ENCODE measurements at regions of chr19 and their contacts with region 1.

Region 1: GRCh38 chr19:55160128-55160985 is 2.8 kb upstream of the TNNI3 start:
- DNase-seq: no peak
- H3K4me3 ChIP-seq: no peak overlapping the region
- CTCF ChIP-seq: peak; percentile 96

Region 2: GRCh38 chr19:55058781-55059539 is 101.4 kb before region 1 on chr19:
- CTCF ChIA-PET with region 1: no interaction called
- POLR2A ChIA-PET with region 1: no interaction called
- DNase-seq: no peak
- H3K4me3 ChIP-seq: no peak overlapping the region
- CTCF ChIP-seq: no peak

Region 3: GRCh38 chr19:55173714-55174409 is 13.5 kb after region 1 on chr19:
- CTCF ChIA-PET with region 1: interaction called, 32 read pairs
- POLR2A ChIA-PET with region 1: no interaction called
- DNase-seq: no peak
- H3K4me3 ChIP-seq: peak overlapping the region; percentile 65
- CTCF ChIP-seq: no peak

Region 4: DNA sequence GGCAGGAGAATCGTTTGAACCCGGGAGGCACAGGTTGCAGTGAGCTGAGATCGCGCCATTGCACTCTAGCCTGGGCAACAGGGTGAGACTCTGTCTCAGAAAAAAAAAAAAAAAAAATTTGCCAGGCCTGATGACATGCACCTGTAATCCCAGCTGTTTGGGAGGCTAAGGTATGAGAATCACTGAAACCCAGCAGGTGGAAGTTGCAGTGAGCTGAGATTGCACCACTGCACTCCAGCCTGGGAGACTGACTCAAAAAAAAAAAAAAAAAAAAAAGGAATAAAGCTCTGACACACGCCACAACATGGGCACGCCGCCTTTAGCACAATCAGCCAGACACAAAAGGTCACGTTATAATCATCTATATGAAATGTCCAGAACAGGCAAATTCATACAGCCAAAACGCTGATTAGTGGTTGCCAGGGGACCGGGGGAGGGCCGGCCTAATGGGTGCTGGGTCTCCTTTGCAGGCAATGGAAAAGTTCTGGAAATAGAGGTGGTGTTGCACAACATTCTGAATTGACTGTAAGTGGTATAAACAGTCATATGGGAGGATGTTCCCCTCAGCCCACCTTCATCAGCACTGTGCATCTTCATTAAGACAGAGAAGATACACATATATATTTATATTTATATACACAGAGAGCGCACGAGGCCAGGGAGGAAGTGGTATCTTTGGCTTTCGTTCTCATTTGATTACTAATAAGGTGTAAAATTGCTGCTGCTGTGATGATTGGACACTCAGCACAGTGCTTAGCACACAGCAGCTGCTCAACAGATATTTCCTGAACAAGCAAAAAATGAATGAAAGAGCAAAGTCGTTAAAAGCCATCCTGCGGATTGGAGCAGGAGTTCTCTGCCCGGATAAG is 115.7 kb after region 1 on chr19:
- CTCF ChIA-PET with region 1: no interaction called
- POLR2A ChIA-PET with region 1: no interaction called
- DNase-seq: no peak
- H3K4me3 ChIP-seq: no peak overlapping the region
- CTCF ChIP-seq: no peak

Measured in AG04449 (cell line).